ENCODE measurements at regions of chr5 and their contacts with region 1.

Region 1: DNA sequence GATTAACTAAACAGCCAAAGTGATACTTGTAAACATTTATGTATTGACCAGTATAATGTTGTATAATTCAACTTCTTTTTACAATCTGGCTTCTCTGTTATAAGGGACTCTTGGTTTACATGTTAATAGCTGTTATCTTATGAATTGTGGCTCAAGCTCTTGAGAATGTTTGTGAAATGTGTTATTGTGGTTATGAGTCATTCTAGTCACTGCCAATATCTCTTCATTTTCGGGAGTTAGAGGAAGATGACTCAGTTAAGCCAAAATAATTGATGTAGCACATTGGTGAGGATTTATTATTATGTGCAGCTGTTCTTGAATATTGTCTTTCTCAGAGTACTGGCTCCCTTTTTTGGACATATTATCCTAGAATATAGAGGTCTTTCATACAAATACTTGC is 655.2 kb upstream of the RIOK2 start:
- DNase-seq: peak; percentile 96
- H3K4me3 ChIP-seq: no peak overlapping the region
- H3K27ac ChIP-seq: peak overlapping the region; percentile 92
- H3K4me1 ChIP-seq: peaks cover 46% of the 10 kb centered on the region
- H3K27me3 ChIP-seq: no peaks in the 10 kb centered on the region
- CTCF ChIP-seq: no peak
- POLR2A ChIP-seq: peak; percentile 47

Region 2: DNA sequence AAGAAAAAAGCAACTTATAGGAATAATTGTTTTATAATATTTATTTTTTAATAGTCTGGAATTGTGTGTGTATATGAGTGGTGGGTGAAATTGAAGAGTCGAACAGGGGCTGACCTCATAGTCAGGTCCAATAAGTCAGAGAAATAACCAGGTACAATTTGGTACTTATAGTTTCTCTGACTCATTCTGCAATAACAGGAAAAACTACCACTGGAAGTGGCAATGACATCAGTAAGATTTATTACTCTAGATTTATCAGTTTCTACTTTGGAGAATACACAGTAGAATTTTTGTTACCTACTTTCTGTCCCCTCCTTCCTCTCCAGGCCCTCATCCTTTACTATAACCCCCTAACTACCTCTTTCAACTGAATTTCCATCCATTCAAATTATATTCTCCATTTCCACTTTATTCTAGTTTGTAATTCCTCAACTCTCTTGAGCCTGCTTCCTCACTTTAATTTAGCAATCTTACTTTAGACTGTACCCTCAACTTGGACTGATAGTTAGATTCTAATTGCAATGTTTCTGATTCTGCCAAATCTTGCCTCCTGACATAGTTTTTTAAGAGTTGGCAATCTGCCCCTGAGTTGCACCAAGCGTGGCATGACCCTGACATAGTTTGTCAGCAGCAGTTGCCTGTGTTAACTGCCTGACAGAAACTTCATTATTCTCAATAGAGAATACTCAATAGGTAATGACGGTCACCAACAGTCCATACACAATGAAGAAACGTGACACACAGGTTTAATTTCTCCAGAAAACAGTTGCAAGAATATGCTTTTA is 179.9 kb before region 1 on chr5:
- CTCF ChIA-PET with region 1: interaction called, 3 read pairs
- POLR2A ChIA-PET with region 1: no interaction called
- dilution Hi-C with region 1: no loop called
- intact Hi-C with region 1: loop called (anchors 1 kb)
- DNase-seq: peak; percentile 56
- H3K4me3 ChIP-seq: no peak overlapping the region
- H3K27ac ChIP-seq: no peak overlapping the region
- H3K4me1 ChIP-seq: peaks cover 19% of the 10 kb centered on the region
- H3K27me3 ChIP-seq: no peaks in the 10 kb centered on the region
- CTCF ChIP-seq: no peak
- POLR2A ChIP-seq: no peak

Region 3: DNA sequence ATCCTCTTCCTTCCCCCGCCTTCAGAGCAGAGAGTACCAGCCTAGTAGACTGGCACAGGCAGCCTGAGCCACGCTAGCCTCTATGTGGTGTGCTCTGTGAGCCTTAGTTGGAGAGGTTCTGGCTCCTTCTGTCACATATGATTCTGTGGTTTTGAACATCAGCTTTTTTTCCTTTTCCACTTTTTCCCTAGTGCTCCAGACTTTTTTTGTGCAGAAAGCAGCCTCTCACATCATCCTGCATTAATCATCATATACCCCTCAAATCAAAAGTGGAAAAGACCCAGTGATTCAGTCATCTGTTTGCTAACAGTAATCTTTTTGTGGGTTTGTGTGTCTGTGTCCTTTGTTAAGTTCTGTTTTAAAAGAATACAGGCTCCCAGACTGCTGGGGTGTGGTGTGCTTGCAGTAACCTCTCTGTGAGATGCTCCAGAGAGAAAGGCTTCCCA is 271.4 kb after region 1 on chr5:
- CTCF ChIA-PET with region 1: no interaction called
- POLR2A ChIA-PET with region 1: interaction called, 3 read pairs
- dilution Hi-C with region 1: no loop called
- intact Hi-C with region 1: loop called (anchors 2 kb)
- DNase-seq: peak; percentile 47
- H3K4me3 ChIP-seq: no peak overlapping the region
- H3K27ac ChIP-seq: peak overlapping the region; percentile 97
- H3K4me1 ChIP-seq: peaks cover 40% of the 10 kb centered on the region
- H3K27me3 ChIP-seq: no peaks in the 10 kb centered on the region
- CTCF ChIP-seq: no peak
- POLR2A ChIP-seq: no peak

Region 4: DNA sequence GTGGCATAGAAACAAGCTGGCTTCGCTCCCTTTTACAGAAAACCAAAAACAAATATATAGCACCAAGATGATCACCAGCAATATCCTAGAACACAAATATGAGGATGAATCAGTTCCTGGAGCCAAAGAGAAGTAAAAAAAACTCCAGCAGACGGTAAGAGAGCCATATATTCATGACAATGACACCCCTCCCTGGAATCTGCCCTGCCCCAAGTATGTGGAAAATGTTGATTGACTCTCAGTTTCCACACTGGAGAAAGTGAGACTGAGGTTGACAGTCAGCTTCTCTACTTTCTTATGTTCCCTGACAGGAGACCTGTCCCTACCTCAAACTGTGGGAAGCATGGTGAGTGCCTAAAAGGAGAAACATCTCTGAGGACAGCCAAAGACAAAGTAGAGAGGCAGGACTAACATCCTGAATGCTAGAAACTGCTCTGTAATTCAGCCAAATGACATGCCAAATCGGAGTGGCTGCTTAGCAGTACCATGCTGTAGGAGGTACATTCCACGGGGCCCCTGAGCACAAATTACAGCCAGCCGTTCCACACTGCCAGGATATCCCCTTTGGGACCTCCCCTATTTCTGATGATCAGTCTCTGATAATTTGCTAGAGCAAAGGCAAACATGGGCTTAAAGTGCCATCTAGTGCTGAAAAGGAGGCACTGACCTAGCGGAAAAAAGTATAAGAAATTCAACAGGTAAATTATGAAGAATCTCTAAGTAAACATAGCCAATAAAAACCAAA is 511.2 kb after region 1 on chr5:
- CTCF ChIA-PET with region 1: no interaction called
- POLR2A ChIA-PET with region 1: no interaction called
- dilution Hi-C with region 1: no loop called
- intact Hi-C with region 1: loop called (anchors 2 kb)
- DNase-seq: peak; percentile 29
- H3K4me3 ChIP-seq: no peak overlapping the region
- H3K27ac ChIP-seq: peak overlapping the region; percentile 18
- H3K4me1 ChIP-seq: no peaks in the 10 kb centered on the region
- H3K27me3 ChIP-seq: no peaks in the 10 kb centered on the region
- CTCF ChIP-seq: peak; percentile 16 to 47
- POLR2A ChIP-seq: no peak